ENCODE measurements at regions of chr6 and their contacts with region 1.

Region 1: DNA sequence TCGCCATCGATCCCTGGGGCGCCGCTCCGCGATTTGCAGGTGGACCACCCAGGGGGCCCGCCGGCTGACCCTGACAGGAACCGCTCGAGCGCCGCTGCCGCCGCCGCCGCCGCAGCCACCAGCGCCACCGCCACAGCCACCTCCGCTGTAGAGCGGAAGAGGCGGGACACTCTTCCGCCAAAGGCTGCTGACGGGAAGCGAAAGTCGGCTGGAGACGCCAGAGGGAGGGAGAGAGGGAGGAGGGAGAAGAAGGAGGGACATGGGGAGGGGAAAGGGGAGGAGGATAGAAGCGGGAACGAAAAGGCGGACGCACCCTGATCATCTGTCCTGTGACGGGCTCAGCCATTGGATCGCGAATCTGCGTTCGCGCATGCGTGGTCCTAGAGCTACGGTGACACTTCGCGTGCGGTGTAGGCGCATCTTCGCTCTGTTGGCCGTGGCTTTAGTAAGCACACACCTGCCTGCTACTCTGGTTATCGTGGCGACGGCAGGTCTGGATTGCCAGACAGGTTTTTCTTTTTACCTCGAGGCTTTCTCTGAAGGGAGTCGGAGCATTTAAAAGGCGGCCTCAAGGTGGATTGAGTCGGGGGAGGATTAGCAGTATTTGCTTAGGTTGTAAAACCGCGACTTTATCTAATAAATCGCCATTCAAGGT is at the start of gene TMEM30A:
- DNase-seq: peak; percentile 99
- ATAC-seq: peak; percentile 98 to 99
- H3K4me3 ChIP-seq: peak within 1 kb of the TSS; percentile 75 to 90 (median 76)
- H3K27ac ChIP-seq: peak within 1 kb of the TSS; percentile 80 to 94 (median 91)
- H3K4me1 ChIP-seq: peaks cover 40 to 42% of the 10 kb centered on the region in 2 donors
- H3K27me3 ChIP-seq: no peaks in the 10 kb centered on the region
- CTCF ChIP-seq: peak in 1 of 5 experiments; percentile 14
- POLR2A ChIP-seq: peak; percentile 83 to 87
- total RNA-seq, gene TMEM30A: 23.8 to 44.4 (median 31.9) TPM

Region 2: GRCh38 chr6:75158176-75158575 is 126.6 kb before region 1 on chr6:
- in situ Hi-C with region 1: no loop called
- intact Hi-C with region 1: no loop called
- DNase-seq: no peak
- ATAC-seq: no peak
- H3K4me3 ChIP-seq: no peak overlapping the region
- H3K27ac ChIP-seq: no peak overlapping the region
- H3K4me1 ChIP-seq: no peaks in the 10 kb centered on the region
- H3K27me3 ChIP-seq: no peaks in the 10 kb centered on the region
- CTCF ChIP-seq: no peak
- POLR2A ChIP-seq: no peak

Region 3: GRCh38 chr6:75243333-75244062 is 41.3 kb before region 1 on chr6 and contains the start of gene COX7A2:
- in situ Hi-C with region 1: no loop called
- intact Hi-C with region 1: loop called (anchors 5 kb)
- DNase-seq: peak; percentile 85 to 93
- ATAC-seq: peak; percentile 99 to 100
- H3K4me3 ChIP-seq: peak within 1 kb of the TSS; percentile 64 to 87 (median 76)
- H3K27ac ChIP-seq: peak within 1 kb of the TSS; percentile 88 to 91 (median 90)
- H3K4me1 ChIP-seq: peaks cover 17 to 32% of the 10 kb centered on the region in 2 donors
- H3K27me3 ChIP-seq: no peaks in the 10 kb centered on the region
- CTCF ChIP-seq: no peak
- POLR2A ChIP-seq: peak; percentile 68 to 79
- total RNA-seq, gene COX7A2: 166 to 413 (median 222) TPM

Region 4: GRCh38 chr6:75493400-75494064 is 208.8 kb after region 1 on chr6 and contains the start of gene FILIP1:
- in situ Hi-C with region 1: no loop called
- intact Hi-C with region 1: loop called (anchors 1 kb)
- DNase-seq: peak; percentile 91 to 92
- ATAC-seq: peak; percentile 91 to 92
- H3K4me3 ChIP-seq: peak within 1 kb of the TSS; percentile 68 to 82 (median 76)
- H3K27ac ChIP-seq: peak within 1 kb of the TSS; percentile 93 to 98 (median 98)
- H3K4me1 ChIP-seq: peaks cover 50 to 55% of the 10 kb centered on the region in 2 donors
- H3K27me3 ChIP-seq: no peaks in the 10 kb centered on the region
- CTCF ChIP-seq: no peak
- POLR2A ChIP-seq: peak; percentile 88 to 98
- total RNA-seq, gene FILIP1: 57.5 to 123 (median 93.8) TPM

Region 5: GRCh38 chr6:75601304-75602245 is 316.8 kb after region 1 on chr6 and contains the start of gene SENP6:
- in situ Hi-C with region 1: no loop called
- intact Hi-C with region 1: loop called (anchors 5 kb)
- DNase-seq: peak; percentile 66 to 78
- ATAC-seq: peak; percentile 88 to 90
- H3K4me3 ChIP-seq: peak within 1 kb of the TSS; percentile 84 to 96 (median 88)
- H3K27ac ChIP-seq: peak within 1 kb of the TSS; percentile 97 to 98 (median 98)
- H3K4me1 ChIP-seq: peaks cover 19 to 32% of the 10 kb centered on the region in 2 donors
- H3K27me3 ChIP-seq: no peaks in the 10 kb centered on the region
- CTCF ChIP-seq: peak in 1 of 5 experiments; percentile 5
- POLR2A ChIP-seq: peak; percentile 85 to 91
- total RNA-seq, gene SENP6: 50.3 to 67.9 (median 57.6) TPM

Measured in gastrocnemius medialis (tissue), 4 donors.